H1 (cell line): ENCODE measurements at regions of chr10 and their contacts with region 1.

Region 1: GRCh38 chr10:74103560-74104248 is 46.9 kb downstream of the AP3M1 start:
- DNase-seq: no peak
- H3K4me3 ChIP-seq: no peak overlapping the region
- H3K27ac ChIP-seq: no peak overlapping the region
- H3K4me1 ChIP-seq: no peaks in the 10 kb centered on the region
- H3K27me3 ChIP-seq: no peaks in the 10 kb centered on the region
- CTCF ChIP-seq: peak in 2 of 3 experiments; percentile 34 to 57; a peak in 2 of 4 replicates
- EP300 ChIP-seq: no peak
- POLR2A ChIP-seq: no peak
- RAD21 ChIP-seq: peak; percentile 41 to 56

Region 2: DNA sequence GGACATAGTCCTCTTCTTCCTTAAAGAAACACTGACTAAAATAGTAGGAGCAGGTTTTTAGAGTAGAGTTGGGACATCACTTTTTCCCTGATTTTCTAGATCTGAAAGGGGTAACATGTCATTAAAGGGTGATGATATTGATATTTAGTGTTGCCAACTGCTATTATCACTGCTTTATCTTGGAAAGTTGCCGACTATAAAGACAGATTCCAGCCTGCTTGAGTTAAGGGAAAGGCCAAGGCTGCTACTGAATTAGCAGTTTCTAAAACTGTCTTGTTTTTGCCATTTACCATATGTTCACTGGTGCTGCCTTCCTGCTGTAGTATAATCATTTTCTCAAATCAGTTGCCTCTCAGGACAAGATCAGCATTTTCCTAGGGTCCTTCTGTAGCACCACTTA is 17.2 kb after region 1 on chr10:
- CTCF ChIA-PET with region 1: interaction called, 12 read pairs
- POLR2A ChIA-PET with region 1: interaction called, 6 read pairs
- DNase-seq: no peak
- H3K4me3 ChIP-seq: no peak overlapping the region
- H3K27ac ChIP-seq: no peak overlapping the region
- H3K4me1 ChIP-seq: no peaks in the 10 kb centered on the region
- H3K27me3 ChIP-seq: no peaks in the 10 kb centered on the region
- CTCF ChIP-seq: no peak
- EP300 ChIP-seq: no peak
- POLR2A ChIP-seq: no peak
- RAD21 ChIP-seq: no peak